Posterior vena cava (tissue), 2 donors: ENCODE measurements at regions of chr4 and their contacts with region 1.

Region 1: DNA sequence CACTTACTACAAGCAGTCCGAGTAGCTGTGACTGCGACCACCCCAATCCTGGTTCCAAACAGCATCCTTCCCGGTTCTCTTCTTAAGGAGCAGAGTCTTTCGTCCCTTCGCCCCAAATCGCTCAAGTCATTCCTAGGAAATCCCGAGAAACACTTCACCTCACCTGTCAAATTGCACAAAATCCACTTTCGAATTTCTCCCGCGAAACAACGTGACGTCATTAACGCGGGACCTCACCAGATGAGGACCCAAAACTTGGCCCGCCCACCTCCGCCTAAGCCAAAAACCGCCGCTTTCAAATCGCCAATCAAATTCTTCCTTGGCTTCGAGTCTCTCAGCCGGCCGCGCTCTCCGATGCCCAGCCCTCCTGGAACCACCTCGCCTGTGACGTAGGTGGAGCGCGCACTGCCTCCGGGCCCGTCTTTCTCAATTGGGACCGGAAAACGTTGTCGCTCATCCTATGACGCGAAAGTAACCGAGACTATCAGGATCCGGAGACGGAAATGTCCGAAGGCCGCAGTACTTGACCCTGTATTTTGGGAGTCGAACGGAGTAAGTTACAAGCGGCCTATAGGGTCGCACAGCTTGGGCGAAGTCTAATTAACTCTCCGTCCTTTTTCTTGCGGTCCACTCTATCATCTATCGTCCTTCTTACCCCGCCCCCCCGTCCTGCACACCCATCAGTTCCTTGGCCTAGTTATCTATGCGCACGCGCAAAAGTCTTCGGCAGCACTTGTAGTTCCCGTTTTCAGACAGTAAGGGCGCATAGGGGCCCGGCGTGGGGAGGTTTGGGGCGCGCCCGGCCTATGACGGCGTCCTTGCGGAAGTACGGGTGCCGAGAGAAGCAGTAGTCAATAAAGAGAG is at the starts of genes LARP7 and ZGRF1:
- DNase-seq: peak; percentile 100
- total RNA-seq, gene LARP7: 42.3 to 50.2 TPM
- total RNA-seq, gene ZGRF1: 3.8 to 5.2 TPM

Region 2: DNA sequence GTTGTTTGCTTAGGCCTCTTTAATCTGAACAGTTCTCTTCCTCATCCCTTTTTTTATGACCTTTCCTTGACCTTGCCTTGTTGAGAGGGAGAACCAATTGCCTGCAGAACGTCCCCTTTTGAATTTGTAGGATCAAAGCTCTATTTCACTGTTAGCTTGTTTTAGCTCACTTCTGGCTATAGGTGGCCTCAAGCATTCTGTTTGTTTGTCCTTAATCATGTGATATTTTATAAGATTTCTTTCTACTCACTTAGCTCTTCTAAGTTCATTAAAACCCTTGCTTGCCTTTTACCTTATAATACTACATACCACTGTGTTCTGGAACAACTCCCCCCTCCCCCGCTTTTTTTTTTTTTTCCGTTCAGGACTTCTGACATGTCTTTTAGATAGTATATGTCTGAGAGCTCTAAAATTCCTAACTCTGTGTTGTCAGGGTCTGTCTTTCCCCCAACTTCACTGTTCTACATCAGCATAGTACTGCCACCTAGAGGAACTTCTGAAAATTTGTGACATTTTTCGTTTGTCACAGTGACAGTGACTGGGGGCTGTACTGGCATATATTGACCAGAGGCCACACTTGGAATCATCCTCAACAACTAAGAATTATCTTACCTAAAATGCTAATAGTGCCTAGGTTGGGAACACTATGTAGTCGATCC is 128.5 kb after region 1 on chr4:
- intact Hi-C with region 1: loop called (anchors 10 kb)
- DNase-seq: no peak

Region 3: DNA sequence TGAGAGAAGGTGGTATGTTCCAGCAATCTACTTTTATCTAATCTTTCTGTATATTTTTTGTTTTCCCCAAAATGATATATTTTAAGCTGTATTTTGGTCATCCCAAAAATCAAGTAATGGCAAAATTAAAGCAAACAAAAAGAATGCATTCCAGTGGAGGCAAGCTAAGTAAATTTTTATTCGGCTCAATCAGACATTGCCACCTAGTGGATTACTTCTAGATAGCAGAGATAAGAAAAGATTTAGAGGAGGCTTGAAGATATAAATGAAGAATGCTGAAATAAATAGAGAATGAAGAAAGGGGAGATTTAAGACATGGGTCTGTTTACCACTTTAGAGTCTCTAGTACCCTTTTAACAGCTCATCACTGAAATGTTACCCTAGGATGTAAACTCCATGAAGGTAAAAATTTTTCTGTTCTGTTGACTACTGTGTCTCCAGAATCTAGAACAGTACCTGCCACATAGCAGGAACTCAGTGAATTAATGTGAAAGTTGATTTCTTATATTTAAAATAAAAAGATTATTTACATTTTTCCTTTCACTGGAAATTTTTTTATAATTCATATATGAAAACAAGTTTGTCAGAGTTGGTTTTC is 301.6 kb after region 1 on chr4:
- intact Hi-C with region 1: loop called in 1 of 2 experiments (anchors 10 kb)
- DNase-seq: no peak

Region 4: GRCh38 chr4:112946127-112946526 is 309.2 kb after region 1 on chr4:
- intact Hi-C with region 1: loop called in 1 of 2 experiments (anchors 5 kb)
- DNase-seq: no peak